CD8-positive, alpha-beta memory T cell (primary cell): ENCODE measurements at regions of chr21 and their contacts with region 1.

Region 1: DNA sequence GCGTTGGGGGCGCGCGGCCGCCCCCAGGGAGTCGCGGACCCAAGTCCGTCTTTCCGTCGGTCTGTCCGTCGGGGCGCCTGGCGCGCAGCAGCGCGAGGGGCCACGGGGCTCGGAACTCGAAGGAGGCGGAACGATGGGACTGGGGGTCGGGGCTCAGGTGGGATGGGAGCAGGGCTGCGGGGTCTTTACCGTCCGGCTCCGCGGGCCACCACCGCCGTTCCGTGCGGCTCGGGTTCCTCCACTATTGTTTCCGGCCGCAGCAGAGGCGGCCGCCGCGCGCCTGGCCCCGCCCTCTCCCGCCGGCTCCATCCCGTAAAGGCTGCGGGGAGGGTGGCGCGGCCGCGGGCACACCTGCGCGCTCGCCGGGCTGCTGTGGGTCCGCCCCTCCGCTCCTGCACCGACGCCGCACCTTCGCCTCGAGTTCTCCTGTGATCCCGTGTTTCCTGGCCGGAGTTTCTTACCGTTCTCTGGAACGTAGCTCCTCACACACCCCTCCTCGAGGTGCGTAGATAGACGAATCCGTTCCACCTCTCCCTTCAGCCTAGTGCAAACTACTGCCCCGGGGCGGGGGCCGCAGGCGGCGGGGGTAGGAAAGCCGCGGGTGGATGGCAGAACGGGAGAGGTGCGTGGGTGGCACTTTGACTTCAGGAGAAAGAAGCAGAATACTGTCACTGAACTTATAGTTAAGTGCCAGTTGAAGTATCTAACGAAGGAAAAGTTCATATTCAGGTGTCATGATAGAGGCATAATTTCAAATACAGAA is at the start of gene C21orf91:
- DNase-seq: peak; percentile 77 to 93 (median 89)
- H3K4me3 ChIP-seq: peak within 1 kb of the TSS; percentile 70
- H3K4me3 Mint-ChIP-seq: peak within 1 kb of the TSS; percentile 95 to 99 (median 98)
- H3K27ac ChIP-seq: peak within 1 kb of the TSS; percentile 88
- H3K27ac Mint-ChIP-seq: peak within 1 kb of the TSS; percentile 96 to 100 (median 99)
- H3K4me1 ChIP-seq: peaks cover 45% of the 10 kb centered on the region
- H3K4me1 Mint-ChIP-seq: peaks cover 45 to 61% (median 57%) of the 10 kb centered on the region in 3 donors
- H3K27me3 ChIP-seq: no peaks in the 10 kb centered on the region
- H3K27me3 Mint-ChIP-seq: no peaks in the 10 kb centered on the region
- total RNA-seq, gene C21orf91: 39.6 to 42.8 TPM

Region 2: GRCh38 chr21:17746912-17747311 is 72.4 kb before region 1 on chr21:
- CTCF ChIA-PET with region 1: no interaction called
- POLR2A ChIA-PET with region 1: no interaction called
- DNase-seq: no peak
- H3K4me3 ChIP-seq: no peak overlapping the region
- H3K4me3 Mint-ChIP-seq: no peak overlapping the region
- H3K27ac ChIP-seq: no peak overlapping the region
- H3K27ac Mint-ChIP-seq: peak overlapping the region in 2 of 8 donors; percentile 6 to 10
- H3K4me1 ChIP-seq: no peaks in the 10 kb centered on the region
- H3K4me1 Mint-ChIP-seq: peaks cover 0 to 4% (median 0%) of the 10 kb centered on the region in 3 donors
- H3K27me3 ChIP-seq: no peaks in the 10 kb centered on the region
- H3K27me3 Mint-ChIP-seq: no peaks in the 10 kb centered on the region

Region 3: GRCh38 chr21:17780539-17780938 is 38.8 kb before region 1 on chr21:
- CTCF ChIA-PET with region 1: interaction called, 8 read pairs
- POLR2A ChIA-PET with region 1: interaction called, 53 read pairs
- DNase-seq: peak in 4 of 5 donors; percentile 35 to 75 (median 53)
- H3K4me3 ChIP-seq: peak overlapping the region; percentile 16
- H3K4me3 Mint-ChIP-seq: peak overlapping the region; percentile 1 to 81 (median 67)
- H3K27ac ChIP-seq: peak overlapping the region; percentile 48
- H3K27ac Mint-ChIP-seq: peak overlapping the region; percentile 79 to 98 (median 94)
- H3K4me1 ChIP-seq: peaks cover 72% of the 10 kb centered on the region
- H3K4me1 Mint-ChIP-seq: peaks cover 82 to 92% (median 87%) of the 10 kb centered on the region in 3 donors
- H3K27me3 ChIP-seq: no peaks in the 10 kb centered on the region
- H3K27me3 Mint-ChIP-seq: no peaks in the 10 kb centered on the region

Region 4: GRCh38 chr21:17793246-17794123 is 25.8 kb before region 1 on chr21:
- CTCF ChIA-PET with region 1: interaction called, 8 read pairs
- POLR2A ChIA-PET with region 1: interaction called, 12 read pairs
- DNase-seq: peak in 1 of 5 donors; percentile 56
- H3K4me3 ChIP-seq: peak overlapping the region; percentile 52
- H3K4me3 Mint-ChIP-seq: peak overlapping the region; percentile 78 to 91 (median 87)
- H3K27ac ChIP-seq: peak overlapping the region; percentile 74
- H3K27ac Mint-ChIP-seq: peak overlapping the region; percentile 88 to 99 (median 96)
- H3K4me1 ChIP-seq: peaks cover 52% of the 10 kb centered on the region
- H3K4me1 Mint-ChIP-seq: peaks cover 71 to 99% (median 96%) of the 10 kb centered on the region in 3 donors
- H3K27me3 ChIP-seq: no peaks in the 10 kb centered on the region
- H3K27me3 Mint-ChIP-seq: peaks cover 0 to 2% of the 10 kb centered on the region in 2 donors

Region 5: GRCh38 chr21:17802572-17802971 is 16.7 kb before region 1 on chr21:
- CTCF ChIA-PET with region 1: interaction called, 13 read pairs
- POLR2A ChIA-PET with region 1: interaction called, 23 read pairs
- DNase-seq: no peak
- H3K4me3 ChIP-seq: no peak overlapping the region
- H3K4me3 Mint-ChIP-seq: peak overlapping the region in 1 of 7 donors; percentile 25
- H3K27ac ChIP-seq: no peak overlapping the region
- H3K27ac Mint-ChIP-seq: peak overlapping the region; percentile 66 to 92 (median 74)
- H3K4me1 ChIP-seq: peaks cover 25% of the 10 kb centered on the region
- H3K4me1 Mint-ChIP-seq: peaks cover 56 to 89% (median 84%) of the 10 kb centered on the region in 3 donors
- H3K27me3 ChIP-seq: no peaks in the 10 kb centered on the region
- H3K27me3 Mint-ChIP-seq: no peaks in the 10 kb centered on the region